Pancreas (tissue), 10 donors: ENCODE measurements at regions of chr3 and their contacts with region 1.

Region 1: DNA sequence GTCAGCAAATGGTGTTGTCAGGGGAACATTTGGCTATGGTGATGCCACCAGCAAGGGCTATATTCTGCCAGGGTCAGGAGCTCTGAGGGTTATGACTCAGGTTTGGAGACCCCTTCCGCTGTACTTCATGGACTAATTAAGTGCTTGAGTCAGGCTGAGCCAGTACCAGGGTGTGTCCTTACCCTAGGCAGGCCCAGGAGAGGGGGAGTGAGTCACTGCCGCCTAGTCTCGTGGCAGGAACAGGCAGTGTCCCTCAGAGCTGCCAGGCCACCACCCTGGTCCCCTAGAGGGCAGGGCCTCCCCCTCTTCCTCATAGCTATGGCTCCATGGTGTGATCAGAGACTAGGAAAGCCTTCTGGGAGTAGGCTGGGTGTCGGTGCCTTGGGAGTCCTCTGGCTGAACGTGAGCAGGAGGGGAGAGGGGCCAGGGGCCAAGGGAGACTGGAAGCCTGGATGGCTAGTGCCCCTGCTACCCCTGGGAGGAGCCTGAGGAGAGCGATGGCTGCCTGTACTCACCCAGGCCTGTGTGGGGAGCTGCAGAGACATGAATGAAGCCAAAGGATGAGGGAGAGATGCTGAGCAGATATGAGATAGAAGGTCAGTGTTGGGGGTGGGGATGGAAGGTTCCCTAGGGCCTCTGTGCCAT is 10.6 kb downstream of the MAPKAPK3 start:
- DNase-seq: peak in 1 of 6 donors; percentile 38
- ATAC-seq: peak in 3 of 4 donors; percentile 37 to 54 (median 47)
- H3K4me3 ChIP-seq: no peak overlapping the region
- H3K27ac ChIP-seq: no peak overlapping the region
- H3K4me1 ChIP-seq: peaks cover 0 to 7% (median 3%) of the 10 kb centered on the region in 3 donors
- H3K27me3 ChIP-seq: no peaks in the 10 kb centered on the region
- CTCF ChIP-seq: no peak

Region 2: DNA sequence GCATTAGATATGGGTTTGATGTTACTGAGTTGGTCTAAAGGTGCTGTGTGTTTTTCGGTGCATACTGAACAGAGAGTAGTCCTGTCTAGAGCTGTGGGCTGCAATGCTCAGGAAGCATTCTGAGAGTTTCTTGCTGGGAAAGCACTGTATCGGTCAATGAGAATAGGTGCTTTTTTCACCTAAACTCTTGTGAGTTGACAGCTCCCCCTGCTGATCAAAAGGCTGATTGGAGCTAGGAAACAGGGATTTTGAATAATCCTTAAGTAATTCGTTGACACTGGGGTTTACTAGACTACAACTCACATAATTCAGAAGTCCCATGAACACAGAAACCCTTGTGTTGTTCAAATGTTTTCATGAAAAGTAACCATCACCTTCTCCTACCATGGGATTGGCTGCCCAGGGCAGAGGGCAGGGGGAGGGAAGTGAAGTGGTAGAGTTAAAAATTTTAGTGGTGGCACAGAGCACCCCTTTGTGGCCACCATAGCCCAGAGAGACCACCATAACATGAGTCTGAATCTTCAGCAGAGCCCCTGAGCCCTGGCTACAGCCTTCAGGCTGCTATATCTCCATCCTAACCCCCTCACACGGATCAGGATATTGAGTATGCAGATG is 744.5 kb after region 1 on chr3:
- intact Hi-C with region 1: loop called in 2 of 3 experiments (anchors 5 to 10 kb)
- DNase-seq: peak in 3 of 6 donors; percentile 32 to 65 (median 52)
- ATAC-seq: peak in 3 of 4 donors; percentile 85 to 92 (median 90)
- H3K4me3 ChIP-seq: no peak overlapping the region
- H3K27ac ChIP-seq: no peak overlapping the region
- H3K4me1 ChIP-seq: no peaks in the 10 kb centered on the region
- H3K27me3 ChIP-seq: no peaks in the 10 kb centered on the region
- CTCF ChIP-seq: peak in 3 of 4 donors; percentile 42 to 59 (median 58)

Region 3: DNA sequence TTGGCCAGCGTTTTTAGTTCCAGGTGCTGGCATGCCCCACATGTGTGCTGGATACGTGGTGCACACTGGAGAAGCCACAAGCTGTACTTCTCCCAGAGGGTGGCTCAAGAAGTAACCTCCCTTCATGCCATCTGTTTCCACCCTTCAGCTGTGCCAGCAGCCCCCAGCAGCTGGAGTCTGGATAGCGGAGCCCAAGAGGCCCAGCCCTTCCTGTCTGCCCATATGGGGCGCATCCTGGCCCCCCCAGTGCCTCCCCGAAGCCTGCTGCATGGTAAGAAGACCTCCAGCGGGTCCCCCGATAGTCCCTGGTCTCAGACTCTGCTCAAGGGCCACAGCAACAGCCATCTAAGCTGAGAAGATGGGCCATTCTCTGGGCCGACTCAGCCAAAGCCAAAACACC is 751.8 kb after region 1 on chr3:
- intact Hi-C with region 1: loop called in 2 of 3 experiments (anchors 5 to 10 kb)
- DNase-seq: peak in 1 of 6 donors; percentile 41
- ATAC-seq: no peak
- H3K4me3 ChIP-seq: no peak overlapping the region
- H3K27ac ChIP-seq: no peak overlapping the region
- H3K4me1 ChIP-seq: peaks cover 0 to 7% (median 0%) of the 10 kb centered on the region in 3 donors
- H3K27me3 ChIP-seq: no peaks in the 10 kb centered on the region
- CTCF ChIP-seq: no peak